GM12878 (cell line): ENCODE measurements at regions of chr2 and their contacts with region 1.

Region 1: GRCh38 chr2:34660741-34661140 is 1061.6 kb upstream of the FAM98A start:
- DNase-seq: no peak
- ATAC-seq: no peak
- H3K4me3 ChIP-seq: no peak overlapping the region
- H3K27ac ChIP-seq: no peak overlapping the region
- H3K4me1 ChIP-seq: no peaks in the 10 kb centered on the region
- H3K27me3 ChIP-seq: no peaks in the 10 kb centered on the region
- CTCF ChIP-seq: no peak
- EP300 ChIP-seq: no peak
- POLR2A ChIP-seq: no peak
- RAD21 ChIP-seq: no peak

Region 2: DNA sequence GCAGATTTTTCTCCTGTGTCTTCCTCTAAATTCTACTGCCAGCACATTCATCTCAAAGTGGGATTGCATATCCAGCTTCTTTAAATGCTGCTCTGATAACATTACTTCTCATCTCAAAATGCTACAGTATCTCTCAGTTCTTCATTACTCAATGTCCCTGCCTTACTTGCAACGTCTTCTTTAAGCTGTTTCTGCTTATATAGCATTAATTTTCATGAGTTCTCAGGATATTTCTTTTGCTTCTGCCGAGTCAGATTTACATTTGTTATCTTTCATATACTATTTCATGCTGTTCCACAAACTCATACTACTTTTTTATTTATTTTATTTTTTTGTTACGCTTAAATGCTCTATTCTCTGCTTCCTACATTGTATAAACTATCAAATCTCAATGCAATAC is 161.9 kb after region 1 on chr2:
- CTCF ChIA-PET with region 1: no interaction called
- POLR2A ChIA-PET with region 1: interaction called, 10 read pairs
- RAD21 ChIA-PET with region 1: no interaction called
- SMC1A ChIA-PET with region 1: no interaction called
- in situ Hi-C with region 1: no loop called
- intact Hi-C with region 1: no loop called
- DNase-seq: no peak
- ATAC-seq: no peak
- H3K4me3 ChIP-seq: no peak overlapping the region
- H3K27ac ChIP-seq: no peak overlapping the region
- H3K4me1 ChIP-seq: no peaks in the 10 kb centered on the region
- H3K27me3 ChIP-seq: no peaks in the 10 kb centered on the region
- CTCF ChIP-seq: no peak
- EP300 ChIP-seq: no peak
- POLR2A ChIP-seq: no peak
- RAD21 ChIP-seq: no peak